GM12878 (cell line): ENCODE measurements at regions of chr16 and their contacts with region 1.

Region 1: GRCh38 chr16:10256784-10257641 is 74.8 kb upstream of the GRIN2A start:
- DNase-seq: peak; percentile 49
- ATAC-seq: peak; percentile 89
- H3K4me3 ChIP-seq: no peak overlapping the region
- H3K27ac ChIP-seq: 0 out of 2 replicates have a peak overlapping the region, but pooled peaks have one; percentile 42
- H3K4me1 ChIP-seq: peaks cover 19% of the 10 kb centered on the region
- H3K27me3 ChIP-seq: no peaks in the 10 kb centered on the region
- CTCF ChIP-seq: peak; percentile 89 to 96 (median 92)
- EP300 ChIP-seq: peak; percentile 17 to 40; a peak in 1 of 4 replicates
- POLR2A ChIP-seq: no peak
- RAD21 ChIP-seq: peak; percentile 90

Region 2: GRCh38 chr16:10189861-10190390 is 67.1 kb before region 1 on chr16:
- CTCF ChIA-PET with region 1: no interaction called
- POLR2A ChIA-PET with region 1: no interaction called
- RAD21 ChIA-PET with region 1: no interaction called
- SMC1A ChIA-PET with region 1: no interaction called
- in situ Hi-C with region 1: no loop called
- intact Hi-C with region 1: no loop called
- DNase-seq: no peak
- ATAC-seq: no peak
- H3K4me3 ChIP-seq: no peak overlapping the region
- H3K27ac ChIP-seq: no peak overlapping the region
- H3K4me1 ChIP-seq: no peaks in the 10 kb centered on the region
- H3K27me3 ChIP-seq: no peaks in the 10 kb centered on the region
- CTCF ChIP-seq: no peak
- EP300 ChIP-seq: no peak
- POLR2A ChIP-seq: no peak
- RAD21 ChIP-seq: no peak

Region 3: GRCh38 chr16:10297341-10298006 is 40.5 kb after region 1 on chr16:
- CTCF ChIA-PET with region 1: interaction called, 13 read pairs
- POLR2A ChIA-PET with region 1: interaction called, 3 read pairs
- RAD21 ChIA-PET with region 1: interaction called, 37 read pairs
- SMC1A ChIA-PET with region 1: interaction called, 30 read pairs
- in situ Hi-C with region 1: no loop called
- intact Hi-C with region 1: loop called (anchors 1 kb)
- DNase-seq: peak; percentile 98
- ATAC-seq: peak; percentile 98
- H3K4me3 ChIP-seq: peak overlapping the region; percentile 50; the same call in 1 of the 2 replicates
- H3K27ac ChIP-seq: peak overlapping the region; percentile 99
- H3K4me1 ChIP-seq: peaks cover 31% of the 10 kb centered on the region
- H3K27me3 ChIP-seq: no peaks in the 10 kb centered on the region
- CTCF ChIP-seq: no peak
- EP300 ChIP-seq: peak; percentile 94 to 96; a peak in 3 of 4 replicates
- POLR2A ChIP-seq: peak; percentile 39; the same call in 1 of the 2 replicates
- RAD21 ChIP-seq: no peak

Region 4: GRCh38 chr16:10314811-10315210 is 57.8 kb after region 1 on chr16:
- CTCF ChIA-PET with region 1: interaction called, 196 read pairs
- POLR2A ChIA-PET with region 1: interaction called, 15 read pairs
- RAD21 ChIA-PET with region 1: interaction called, 71 read pairs
- SMC1A ChIA-PET with region 1: interaction called, 139 read pairs
- in situ Hi-C with region 1: no loop called
- intact Hi-C with region 1: loop called (anchors 1 kb)
- DNase-seq: no peak
- ATAC-seq: peak; percentile 9; the same call in 1 of the 3 replicates
- H3K4me3 ChIP-seq: no peak overlapping the region
- H3K27ac ChIP-seq: no peak overlapping the region
- H3K4me1 ChIP-seq: peaks cover 13% of the 10 kb centered on the region
- H3K27me3 ChIP-seq: no peaks in the 10 kb centered on the region
- CTCF ChIP-seq: peak; percentile 9 to 52 (median 29); a peak in 4 of 6 replicates
- EP300 ChIP-seq: no peak
- POLR2A ChIP-seq: no peak
- RAD21 ChIP-seq: peak; percentile 63

Region 5: GRCh38 chr16:10370096-10370726 is 113.2 kb after region 1 on chr16:
- CTCF ChIA-PET with region 1: no interaction called
- POLR2A ChIA-PET with region 1: no interaction called
- RAD21 ChIA-PET with region 1: no interaction called
- SMC1A ChIA-PET with region 1: interaction called, 3 read pairs
- in situ Hi-C with region 1: no loop called
- intact Hi-C with region 1: loop called (anchors 5 kb)
- DNase-seq: peak; percentile 19
- ATAC-seq: peak; percentile 79
- H3K4me3 ChIP-seq: no peak overlapping the region
- H3K27ac ChIP-seq: no peak overlapping the region
- H3K4me1 ChIP-seq: no peaks in the 10 kb centered on the region
- H3K27me3 ChIP-seq: no peaks in the 10 kb centered on the region
- CTCF ChIP-seq: no peak
- EP300 ChIP-seq: no peak
- POLR2A ChIP-seq: no peak
- RAD21 ChIP-seq: no peak

Region 6: GRCh38 chr16:10504404-10504885 is 247.4 kb after region 1 on chr16:
- CTCF ChIA-PET with region 1: interaction called, 136 read pairs
- POLR2A ChIA-PET with region 1: no interaction called
- RAD21 ChIA-PET with region 1: interaction called, 48 read pairs
- SMC1A ChIA-PET with region 1: interaction called, 193 read pairs
- in situ Hi-C with region 1: loop called (anchors 5 kb)
- intact Hi-C with region 1: loop called (anchors 1 kb)
- DNase-seq: no peak
- ATAC-seq: no peak; the same call in 2 of the 3 replicates
- H3K4me3 ChIP-seq: no peak overlapping the region
- H3K27ac ChIP-seq: no peak overlapping the region
- H3K4me1 ChIP-seq: no peaks in the 10 kb centered on the region; the same call in 1 of the 2 replicates
- H3K27me3 ChIP-seq: no peaks in the 10 kb centered on the region
- CTCF ChIP-seq: no peak
- EP300 ChIP-seq: no peak
- POLR2A ChIP-seq: no peak
- RAD21 ChIP-seq: no peak

Region 7: DNA sequence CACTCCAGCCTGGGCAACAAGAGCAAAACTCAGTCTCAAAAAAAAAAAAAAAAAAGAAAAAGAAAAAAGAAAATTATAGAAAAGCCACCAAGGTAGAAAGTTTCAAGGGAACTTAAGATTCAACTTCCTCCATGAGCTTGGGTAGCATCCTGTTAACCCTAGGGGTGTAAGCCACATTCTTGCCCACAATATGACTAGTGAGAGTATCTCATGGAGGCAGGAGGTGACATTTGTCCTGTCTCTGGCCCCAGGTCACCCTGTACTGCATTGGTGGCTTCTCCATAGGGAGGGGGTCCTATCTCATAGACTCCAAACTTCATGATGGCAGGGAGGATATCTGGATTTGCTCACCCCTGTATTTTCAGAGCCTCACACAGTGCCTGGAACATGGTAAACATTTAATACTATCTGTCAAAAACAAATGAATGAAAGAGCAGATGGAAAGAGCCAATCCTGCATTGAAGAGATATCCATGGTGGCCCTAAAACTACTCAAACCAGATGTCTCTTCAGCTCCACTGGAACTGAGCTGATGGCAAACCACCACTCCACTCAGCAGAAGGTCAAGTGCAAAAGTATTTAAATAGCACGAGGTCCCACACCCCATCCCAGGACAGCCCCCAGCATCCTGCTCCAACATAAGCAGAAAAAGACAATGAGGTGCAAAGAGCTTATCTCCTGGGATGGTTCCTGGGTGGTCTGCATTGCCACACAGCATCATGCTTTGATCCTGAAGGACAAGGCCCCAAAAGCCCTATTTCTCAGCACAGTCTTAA is 273.1 kb after region 1 on chr16:
- CTCF ChIA-PET with region 1: no interaction called
- POLR2A ChIA-PET with region 1: no interaction called
- RAD21 ChIA-PET with region 1: no interaction called
- SMC1A ChIA-PET with region 1: no interaction called
- in situ Hi-C with region 1: no loop called
- intact Hi-C with region 1: no loop called
- DNase-seq: no peak
- ATAC-seq: no peak
- H3K4me3 ChIP-seq: no peak overlapping the region
- H3K27ac ChIP-seq: no peak overlapping the region
- H3K4me1 ChIP-seq: no peaks in the 10 kb centered on the region
- H3K27me3 ChIP-seq: no peaks in the 10 kb centered on the region; a peak in 1 of 4 replicates
- CTCF ChIP-seq: no peak
- EP300 ChIP-seq: no peak
- POLR2A ChIP-seq: no peak
- RAD21 ChIP-seq: no peak